MCF 10A (cell line): ENCODE measurements at regions of chr16 and their contacts with region 1.

Region 1: GRCh38 chr16:50024684-50025536 is at the start of gene CNEP1R1:
- DNase-seq: peak; percentile 96
- H3K4me3 Mint-ChIP-seq: peak within 1 kb of the TSS; percentile 91
- H3K27ac Mint-ChIP-seq: peak within 1 kb of the TSS; percentile 82
- H3K4me1 Mint-ChIP-seq: peaks cover 5% of the 10 kb centered on the region
- H3K27me3 Mint-ChIP-seq: peaks cover 17% of the 10 kb centered on the region
- CTCF ChIP-seq: peak; percentile 99
- total RNA-seq, gene CNEP1R1: 22.0 and 23.2 TPM in 2 replicates

Region 2: DNA sequence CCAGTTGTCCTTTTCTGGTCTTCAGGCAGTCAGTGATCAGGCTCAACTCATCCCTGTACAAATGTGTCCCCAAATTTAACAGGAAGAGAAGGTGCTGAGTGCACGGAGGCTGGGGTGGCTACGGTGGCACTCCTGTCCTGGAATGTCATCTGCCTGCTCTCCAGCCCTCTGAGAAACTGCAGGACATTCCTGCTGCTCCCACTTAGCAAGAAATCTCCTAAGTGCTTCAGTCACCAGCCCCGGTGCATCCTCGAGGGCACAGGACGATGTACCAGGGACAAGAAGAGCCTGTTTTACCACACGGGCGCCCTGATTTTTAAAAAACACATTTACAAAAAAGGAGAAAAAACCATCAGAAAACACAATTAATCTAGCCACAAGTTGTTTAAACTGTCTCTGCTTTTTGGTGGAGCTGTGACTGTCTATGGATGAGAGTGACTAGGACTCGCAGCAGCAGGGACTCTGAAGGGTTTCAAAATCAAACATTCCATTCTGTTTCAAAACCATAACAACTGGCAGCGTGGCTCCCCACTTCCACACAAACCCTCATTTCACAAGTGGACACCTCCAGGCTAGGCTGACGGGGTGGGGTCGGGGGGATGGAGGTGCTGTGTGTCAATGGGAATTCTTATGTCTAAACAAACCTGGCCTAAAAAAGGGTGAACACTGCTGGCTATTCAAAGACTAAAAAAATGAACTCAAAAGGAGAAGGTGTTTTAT is 65.2 kb before region 1 on chr16:
- CTCF ChIA-PET with region 1: interaction called, 6 read pairs
- POLR2A ChIA-PET with region 1: interaction called, 3 read pairs
- intact Hi-C with region 1: loop called (anchors 5 kb)
- DNase-seq: no peak
- H3K4me3 Mint-ChIP-seq: no peak overlapping the region
- H3K27ac Mint-ChIP-seq: no peak overlapping the region
- H3K4me1 Mint-ChIP-seq: peaks cover 22% of the 10 kb centered on the region
- H3K27me3 Mint-ChIP-seq: peaks cover 8% of the 10 kb centered on the region
- CTCF ChIP-seq: no peak

Region 3: GRCh38 chr16:50035468-50035992 is 10.6 kb after region 1 on chr16:
- CTCF ChIA-PET with region 1: interaction called, 12 read pairs
- POLR2A ChIA-PET with region 1: interaction called, 10 read pairs
- intact Hi-C with region 1: no loop called
- DNase-seq: no peak
- H3K4me3 Mint-ChIP-seq: no peak overlapping the region
- H3K27ac Mint-ChIP-seq: no peak overlapping the region
- H3K4me1 Mint-ChIP-seq: peaks cover 11% of the 10 kb centered on the region
- H3K27me3 Mint-ChIP-seq: no peaks in the 10 kb centered on the region
- CTCF ChIP-seq: no peak

Region 4: DNA sequence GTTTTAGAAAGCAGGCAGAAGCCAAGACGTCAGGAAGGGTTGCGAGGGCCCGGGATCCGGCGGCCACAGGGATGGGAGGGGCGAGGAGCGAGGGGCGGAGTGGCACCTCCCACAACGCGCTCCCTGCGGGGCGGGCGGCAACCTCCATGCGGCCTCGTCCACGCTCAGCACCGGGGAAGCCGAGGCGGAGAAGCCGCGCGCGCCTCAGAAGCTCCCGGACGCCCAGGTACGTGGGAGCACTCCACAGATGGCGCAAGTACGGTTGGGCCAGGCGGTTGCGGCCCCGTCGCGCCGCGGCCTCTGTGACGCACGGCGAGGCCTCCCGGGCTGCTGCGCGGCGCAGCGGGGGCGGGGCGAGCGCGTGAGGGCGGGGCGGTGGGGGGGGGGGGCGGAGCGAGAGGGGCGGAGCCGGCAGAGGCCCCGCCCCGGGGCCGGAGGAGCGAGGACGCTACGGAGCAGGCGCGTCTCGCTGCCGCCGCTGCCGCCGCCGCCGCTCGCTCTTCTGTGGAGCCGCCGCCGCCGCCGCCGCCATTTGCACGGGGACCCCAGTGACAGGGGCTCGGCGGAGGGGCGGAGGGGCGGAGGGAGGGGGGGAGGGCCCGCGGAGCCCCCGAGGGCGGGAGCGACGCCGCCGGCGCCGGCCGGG is 128.0 kb after region 1 on chr16 and contains the start of gene TENT4B:
- CTCF ChIA-PET with region 1: interaction called, 5 read pairs
- POLR2A ChIA-PET with region 1: interaction called, 5 read pairs
- intact Hi-C with region 1: loop called (anchors 10 kb)
- DNase-seq: peak; percentile 83
- H3K4me3 Mint-ChIP-seq: peak within 1 kb of the TSS; percentile 76
- H3K27ac Mint-ChIP-seq: peak within 1 kb of the TSS; percentile 84
- H3K4me1 Mint-ChIP-seq: peaks cover 22% of the 10 kb centered on the region
- H3K27me3 Mint-ChIP-seq: no peaks in the 10 kb centered on the region
- CTCF ChIP-seq: no peak
- total RNA-seq, gene TENT4B: 11.5 and 12.1 TPM in 2 replicates

Region 5: GRCh38 chr16:50360033-50360778 is 335.3 kb after region 1 on chr16:
- CTCF ChIA-PET with region 1: interaction called, 17 read pairs
- POLR2A ChIA-PET with region 1: interaction called, 4 read pairs
- intact Hi-C with region 1: loop called (anchors 2 kb)
- DNase-seq: peak; percentile 70
- H3K4me3 Mint-ChIP-seq: no peak overlapping the region
- H3K27ac Mint-ChIP-seq: peak overlapping the region; percentile 87
- H3K4me1 Mint-ChIP-seq: peaks cover 33% of the 10 kb centered on the region
- H3K27me3 Mint-ChIP-seq: no peaks in the 10 kb centered on the region
- CTCF ChIP-seq: no peak